Panc1 (cell line): ENCODE measurements at regions of chr14 and their contacts with region 1.

Region 1: GRCh38 chr14:60164712-60165546 is at the start of gene DHRS7:
- DNase-seq: peak; percentile 42
- ATAC-seq: peak; percentile 100
- H3K4me3 ChIP-seq: peak within 1 kb of the TSS; percentile 74 to 92
- H3K27ac ChIP-seq: peak within 1 kb of the TSS; percentile 81
- H3K4me1 ChIP-seq: no peaks in the 10 kb centered on the region; the same call in 1 of the 2 replicates
- H3K27me3 ChIP-seq: no peaks in the 10 kb centered on the region
- CTCF ChIP-seq: peak; percentile 77
- total RNA-seq, gene DHRS7: 34.5 TPM

Region 2: GRCh38 chr14:60064491-60065072 is 100.3 kb before region 1 on chr14:
- CTCF ChIA-PET with region 1: no interaction called
- POLR2A ChIA-PET with region 1: no interaction called
- in situ Hi-C with region 1: no loop called
- intact Hi-C with region 1: loop called (anchors 5 kb)
- DNase-seq: peak; percentile 15
- ATAC-seq: no peak
- H3K4me3 ChIP-seq: no peak overlapping the region
- H3K27ac ChIP-seq: no peak overlapping the region
- H3K4me1 ChIP-seq: no peaks in the 10 kb centered on the region
- H3K27me3 ChIP-seq: no peaks in the 10 kb centered on the region
- CTCF ChIP-seq: no peak

Region 3: GRCh38 chr14:60091550-60092530 is 73.1 kb before region 1 on chr14 and contains the start of gene PCNX4:
- CTCF ChIA-PET with region 1: no interaction called
- POLR2A ChIA-PET with region 1: no interaction called
- in situ Hi-C with region 1: no loop called
- intact Hi-C with region 1: loop called (anchors 10 kb)
- DNase-seq: peak; percentile 93
- ATAC-seq: peak; percentile 98
- H3K4me3 ChIP-seq: peak within 1 kb of the TSS; percentile 68 to 92
- H3K27ac ChIP-seq: peak within 1 kb of the TSS; percentile 90
- H3K4me1 ChIP-seq: peaks cover 18% of the 10 kb centered on the region
- H3K27me3 ChIP-seq: no peaks in the 10 kb centered on the region
- CTCF ChIP-seq: no peak
- total RNA-seq, gene PCNX4: 60.0 TPM

Region 4: DNA sequence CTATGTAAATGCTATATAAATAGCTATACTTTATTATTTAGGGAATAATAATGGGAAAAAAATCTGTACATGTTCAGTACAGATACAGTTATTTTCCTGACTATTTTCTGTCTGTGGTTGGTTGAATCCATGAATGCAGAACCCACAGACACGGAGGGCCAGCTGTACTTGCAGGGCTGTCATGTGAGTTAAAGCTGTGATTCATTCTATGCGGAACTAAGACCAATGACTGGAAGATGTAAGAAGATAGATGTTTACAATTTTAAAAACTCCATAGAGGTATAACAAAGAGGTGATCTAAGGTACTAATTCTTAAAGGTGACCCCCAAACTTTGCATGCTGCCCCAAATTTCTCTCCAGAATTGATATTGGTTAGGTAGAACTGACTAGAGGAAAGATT is 58.6 kb before region 1 on chr14:
- CTCF ChIA-PET with region 1: no interaction called
- POLR2A ChIA-PET with region 1: no interaction called
- in situ Hi-C with region 1: no loop called
- intact Hi-C with region 1: no loop called
- DNase-seq: no peak
- ATAC-seq: no peak
- H3K4me3 ChIP-seq: no peak overlapping the region
- H3K27ac ChIP-seq: no peak overlapping the region
- H3K4me1 ChIP-seq: no peaks in the 10 kb centered on the region
- H3K27me3 ChIP-seq: no peaks in the 10 kb centered on the region
- CTCF ChIP-seq: no peak

Region 5: GRCh38 chr14:60302663-60303062 is 137.7 kb after region 1 on chr14:
- CTCF ChIA-PET with region 1: no interaction called
- POLR2A ChIA-PET with region 1: interaction called, 11 read pairs
- in situ Hi-C with region 1: no loop called
- intact Hi-C with region 1: no loop called
- DNase-seq: no peak
- ATAC-seq: no peak
- H3K4me3 ChIP-seq: no peak overlapping the region
- H3K27ac ChIP-seq: no peak overlapping the region
- H3K4me1 ChIP-seq: no peaks in the 10 kb centered on the region
- H3K27me3 ChIP-seq: no peaks in the 10 kb centered on the region
- CTCF ChIP-seq: no peak